ENCODE measurements at regions of chr3 and their contacts with region 1.

Region 1: DNA sequence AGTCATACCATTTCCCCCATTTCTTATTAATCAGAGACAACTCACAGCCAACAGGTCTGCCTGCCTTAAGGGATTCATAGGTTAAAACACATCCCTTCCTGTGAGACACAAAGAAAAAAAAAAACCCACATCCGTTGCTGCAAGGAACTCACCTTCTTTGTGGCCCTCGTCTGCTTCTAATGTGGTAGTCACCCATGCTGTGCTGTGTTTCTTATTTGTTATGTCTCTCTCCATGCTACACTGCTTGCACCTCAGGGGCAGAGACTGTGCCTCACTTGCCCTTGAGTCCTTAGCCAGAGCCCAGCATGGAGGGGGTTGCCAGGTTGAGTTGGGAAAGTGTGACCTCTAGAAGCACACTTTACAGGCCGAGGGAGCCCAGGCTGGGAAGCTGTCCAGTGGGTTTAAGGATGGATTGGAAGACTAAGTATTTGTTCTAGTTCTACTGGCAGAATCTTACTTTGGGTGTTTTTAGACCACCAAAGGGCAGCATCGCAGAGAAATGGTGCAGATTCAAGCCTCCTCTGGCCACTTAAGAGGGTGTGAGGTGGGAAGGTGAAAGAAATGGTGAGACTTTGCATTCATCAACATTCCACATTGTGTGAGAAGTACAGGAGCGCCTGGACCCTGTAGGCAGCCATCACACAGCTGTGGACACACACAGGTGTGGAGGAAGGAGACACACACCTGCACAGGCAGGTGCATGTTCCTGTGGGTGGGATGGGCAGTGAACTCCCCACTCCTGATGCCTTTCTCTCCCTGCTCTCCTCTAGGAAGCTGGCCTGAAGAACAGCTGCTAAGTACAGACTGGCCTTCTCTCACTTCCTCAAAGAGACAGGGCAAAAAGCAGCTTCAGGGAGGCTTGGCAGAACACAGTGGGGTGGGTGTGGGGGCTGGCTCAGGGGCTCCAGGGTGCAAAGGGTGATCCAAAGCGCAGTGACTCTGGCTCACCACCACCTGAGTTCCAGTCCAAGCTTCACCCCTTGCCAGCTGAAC is 48.8 kb downstream of the GLB1 start:
- DNase-seq: peak; percentile 21 to 87 (median 58)
- ATAC-seq: peak; percentile 86
- H3K4me3 ChIP-seq: no peak overlapping the region
- H3K4me3 Mint-ChIP-seq: peak overlapping the region; percentile 66
- H3K27ac ChIP-seq: peak overlapping the region in 1 of 2 experiments; percentile 14
- H3K27ac Mint-ChIP-seq: peak overlapping the region; percentile 92
- H3K4me1 ChIP-seq: peaks cover 56% of the 10 kb centered on the region
- H3K4me1 Mint-ChIP-seq: peaks cover 73% of the 10 kb centered on the region
- H3K27me3 ChIP-seq: no peaks in the 10 kb centered on the region
- H3K27me3 Mint-ChIP-seq: no peaks in the 10 kb centered on the region
- CTCF ChIP-seq: no peak

Region 2: GRCh38 chr3:32106280-32106928 is 941.7 kb before region 1 on chr3 and contains the start of gene GPD1L:
- CTCF ChIA-PET with region 1: no interaction called
- POLR2A ChIA-PET with region 1: no interaction called
- intact Hi-C with region 1: loop called in 1 of 2 experiments (anchors 10 kb)
- DNase-seq: peak; percentile 84 to 95 (median 90)
- ATAC-seq: peak; percentile 97
- H3K4me3 ChIP-seq: peak within 1 kb of the TSS; percentile 70 to 80
- H3K4me3 Mint-ChIP-seq: peak within 1 kb of the TSS; percentile 91
- H3K27ac ChIP-seq: peak within 1 kb of the TSS; percentile 46 to 57
- H3K27ac Mint-ChIP-seq: peak within 1 kb of the TSS; percentile 67
- H3K4me1 ChIP-seq: peaks cover 13% of the 10 kb centered on the region
- H3K4me1 Mint-ChIP-seq: peaks cover 33% of the 10 kb centered on the region
- H3K27me3 ChIP-seq: no peaks in the 10 kb centered on the region
- H3K27me3 Mint-ChIP-seq: no peaks in the 10 kb centered on the region
- CTCF ChIP-seq: no peak
- total RNA-seq, gene GPD1L: 9.5 to 9.8 TPM

Region 3: DNA sequence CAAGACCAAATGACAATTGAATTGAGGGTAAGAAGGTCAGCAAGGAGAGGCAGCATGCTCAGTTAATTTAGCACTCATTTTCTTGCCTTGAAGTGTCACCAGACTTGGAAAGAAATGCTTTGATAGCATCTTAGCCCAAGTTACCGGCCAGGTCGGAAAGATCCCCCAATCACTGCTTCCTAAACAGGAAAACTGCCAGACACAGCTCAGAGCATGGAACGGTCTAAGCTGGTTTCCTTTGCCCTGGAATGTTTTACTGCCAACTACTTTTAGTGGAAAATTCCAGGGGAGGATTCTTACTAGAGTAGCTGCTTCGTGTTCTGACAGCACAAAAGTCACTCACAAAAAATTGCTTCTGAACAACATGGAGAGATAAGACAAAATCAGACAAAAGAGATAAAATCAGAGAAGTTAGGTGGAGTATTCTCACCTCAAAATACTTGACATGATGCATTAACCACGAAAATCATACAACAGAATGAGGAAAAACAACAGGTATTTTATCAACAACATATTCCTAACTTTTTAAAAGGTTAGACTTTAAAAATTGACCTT is 31.2 kb before region 1 on chr3:
- CTCF ChIA-PET with region 1: no interaction called
- POLR2A ChIA-PET with region 1: no interaction called
- intact Hi-C with region 1: no loop called
- DNase-seq: no peak
- ATAC-seq: no peak
- H3K4me3 ChIP-seq: no peak overlapping the region
- H3K4me3 Mint-ChIP-seq: no peak overlapping the region
- H3K27ac ChIP-seq: no peak overlapping the region
- H3K27ac Mint-ChIP-seq: peak overlapping the region; percentile 15
- H3K4me1 ChIP-seq: no peaks in the 10 kb centered on the region
- H3K4me1 Mint-ChIP-seq: peaks cover 22% of the 10 kb centered on the region
- H3K27me3 ChIP-seq: no peaks in the 10 kb centered on the region
- H3K27me3 Mint-ChIP-seq: no peaks in the 10 kb centered on the region
- CTCF ChIP-seq: no peak

Measured in CD8-positive, alpha-beta T cell (primary cell).